Heart right ventricle (tissue), 16 donors: ENCODE measurements at regions of chr17 and their contacts with region 1.

Region 1: DNA sequence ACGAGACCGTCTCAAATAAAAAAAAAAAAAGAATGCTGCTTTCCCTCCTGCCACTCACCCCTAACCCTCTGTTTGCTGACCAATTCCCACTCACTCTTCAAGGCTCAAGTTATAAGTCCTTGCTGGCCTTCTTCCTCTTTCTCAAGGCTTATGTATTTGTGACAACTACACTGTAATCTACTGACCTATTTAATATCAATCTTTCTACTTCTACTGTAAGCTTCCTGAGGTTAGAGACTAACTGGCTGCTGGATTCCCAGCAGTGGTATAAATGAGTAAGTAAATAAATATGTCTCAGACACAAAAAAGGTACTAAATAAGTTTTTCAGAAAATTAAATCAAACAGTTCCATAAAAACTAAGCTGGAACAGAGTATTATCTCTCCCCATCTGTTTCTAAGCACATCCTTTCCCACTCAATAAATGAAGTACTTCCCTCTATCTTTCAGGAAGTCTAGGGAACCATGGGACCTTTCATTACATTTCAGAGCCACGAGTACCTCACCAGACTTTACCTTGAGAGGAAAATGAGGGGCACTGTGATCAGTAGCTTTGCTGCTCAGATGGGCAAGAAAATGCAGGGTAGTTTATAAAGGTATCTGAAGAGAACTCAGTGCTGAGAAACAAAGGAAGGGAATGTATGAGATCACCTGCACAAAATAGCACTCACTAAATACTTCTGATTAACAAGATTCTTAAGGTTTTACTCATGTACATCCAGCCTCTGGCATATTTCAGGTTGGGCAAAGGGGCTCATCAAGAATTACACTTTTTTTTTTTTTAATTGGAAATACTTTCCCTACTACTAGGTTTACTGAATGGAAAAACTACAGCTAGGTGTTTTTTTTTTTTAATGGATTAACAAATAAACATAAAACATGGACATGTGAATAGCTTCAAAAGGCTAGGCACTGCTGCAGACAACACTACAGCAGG is 10.8 kb downstream of the SSH2 start:
- DNase-seq: no peak
- ATAC-seq: peak in 2 of 8 donors; percentile 30 to 58
- H3K4me3 ChIP-seq: no peak overlapping the region
- H3K27ac ChIP-seq: peak overlapping the region in 3 of 10 donors; percentile 7 to 30 (median 8)
- H3K4me1 ChIP-seq: peaks cover 0 to 29% (median 9%) of the 10 kb centered on the region in 9 donors
- H3K27me3 ChIP-seq: no peaks in the 10 kb centered on the region
- CTCF ChIP-seq: no peak

Region 2: DNA sequence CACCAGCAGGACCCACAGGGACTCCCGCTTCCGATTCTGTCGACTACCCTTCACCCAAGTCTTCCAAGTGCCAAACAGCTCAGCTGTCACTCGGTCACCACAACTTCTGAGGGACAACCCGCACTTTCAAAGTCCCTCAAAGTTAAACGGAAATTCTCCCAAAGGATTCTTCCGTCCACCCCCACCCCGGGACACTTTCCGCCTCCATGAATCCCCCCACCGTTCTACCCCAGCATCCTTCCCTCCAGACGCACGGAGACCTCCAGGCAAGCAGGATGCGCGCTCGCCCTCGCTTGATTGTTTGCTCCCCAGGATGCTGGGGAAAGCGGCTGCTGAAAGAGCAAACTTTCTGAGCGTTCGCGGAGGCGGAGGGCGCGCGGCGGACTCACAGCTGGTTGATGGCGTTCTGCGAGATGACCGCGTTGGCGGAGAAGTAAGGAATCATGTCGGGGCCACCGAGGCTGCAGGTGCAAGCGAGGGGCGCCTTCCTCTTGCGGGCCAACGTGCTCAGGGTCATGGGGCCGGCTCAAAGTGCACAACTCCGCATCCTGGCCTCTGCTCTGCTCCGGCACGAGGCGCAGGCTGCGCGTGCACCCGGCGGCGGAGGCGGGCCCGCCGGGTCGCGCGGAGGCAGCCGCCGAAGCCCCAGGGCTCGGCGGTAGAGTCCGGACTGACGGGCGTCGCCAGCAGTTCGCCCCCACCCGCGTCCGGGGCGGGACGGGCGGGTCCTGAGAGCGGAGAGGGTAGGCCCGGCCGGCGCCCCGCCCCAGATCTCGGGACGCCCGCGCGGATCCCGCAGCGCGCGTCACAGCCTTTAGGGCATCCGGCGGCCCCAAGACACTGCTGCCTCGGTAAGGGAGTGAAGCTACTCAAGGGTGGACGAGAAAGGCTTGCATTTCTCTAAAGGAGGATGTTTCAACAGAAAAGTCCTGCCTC is 158.2 kb before region 1 on chr17:
- intact Hi-C with region 1: no loop called
- DNase-seq: peak; percentile 91 to 94
- ATAC-seq: peak; percentile 96 to 99 (median 98)
- H3K4me3 ChIP-seq: peak overlapping the region; percentile 69 to 97 (median 86)
- H3K27ac ChIP-seq: peak overlapping the region; percentile 86 to 96 (median 92)
- H3K4me1 ChIP-seq: peaks cover 3 to 40% (median 19%) of the 10 kb centered on the region in 9 donors
- H3K27me3 ChIP-seq: no peaks in the 10 kb centered on the region
- CTCF ChIP-seq: peak in 2 of 9 donors; percentile 4 to 11

Region 3: GRCh38 chr17:29867643-29868181 is 51.5 kb before region 1 on chr17:
- intact Hi-C with region 1: loop called in 1 of 10 experiments (anchors 10 kb)
- DNase-seq: no peak
- ATAC-seq: no peak
- H3K4me3 ChIP-seq: no peak overlapping the region
- H3K27ac ChIP-seq: no peak overlapping the region
- H3K4me1 ChIP-seq: peaks cover 0 to 31% (median 4%) of the 10 kb centered on the region in 9 donors
- H3K27me3 ChIP-seq: no peaks in the 10 kb centered on the region
- CTCF ChIP-seq: peak in 4 of 9 donors; percentile 21 to 39 (median 30)

Region 4: DNA sequence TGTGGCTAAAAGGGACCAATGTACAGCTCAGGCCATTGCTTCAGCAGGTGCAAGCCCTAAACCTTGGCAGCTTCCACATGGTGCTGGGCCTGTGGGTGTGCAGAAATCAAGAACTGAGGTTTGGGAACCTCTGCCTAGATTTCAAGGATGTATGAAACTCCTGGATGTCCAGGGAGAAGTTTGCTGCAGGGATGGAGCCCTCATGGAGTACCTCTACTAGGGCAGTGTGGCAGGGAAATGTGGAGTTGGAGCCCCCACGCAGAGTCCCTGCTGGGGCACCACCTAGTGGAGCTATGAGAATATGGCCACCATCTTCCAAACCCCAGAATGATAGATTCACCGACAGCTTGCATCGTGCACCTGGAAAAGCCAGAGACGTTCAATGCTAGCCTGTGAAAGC is 35.2 kb after region 1 on chr17:
- intact Hi-C with region 1: no loop called
- DNase-seq: no peak
- ATAC-seq: no peak
- H3K4me3 ChIP-seq: no peak overlapping the region
- H3K27ac ChIP-seq: no peak overlapping the region
- H3K4me1 ChIP-seq: no peaks in the 10 kb centered on the region
- H3K27me3 ChIP-seq: no peaks in the 10 kb centered on the region
- CTCF ChIP-seq: peak in 2 of 9 donors; percentile 11 to 18

Region 5: DNA sequence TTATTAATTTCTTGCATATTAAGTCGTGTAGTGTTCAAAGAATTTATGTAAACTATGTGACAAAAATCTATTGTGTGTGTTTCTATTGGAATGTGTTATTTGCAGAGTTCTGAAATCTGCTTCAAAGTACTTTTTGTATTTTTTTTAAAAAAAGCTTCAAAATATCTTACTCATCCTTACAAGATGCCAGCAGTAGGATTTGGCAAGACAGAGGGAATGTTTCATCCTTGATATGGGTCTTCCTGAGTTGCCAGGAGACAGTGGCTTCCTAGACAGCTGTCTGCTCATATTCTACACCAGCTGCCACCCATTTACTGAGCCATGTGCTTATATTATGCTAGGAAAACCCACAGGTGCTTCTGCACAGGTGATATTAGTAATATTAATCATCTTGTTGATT is 58.6 kb after region 1 on chr17:
- intact Hi-C with region 1: no loop called
- DNase-seq: no peak
- ATAC-seq: no peak
- H3K4me3 ChIP-seq: no peak overlapping the region
- H3K27ac ChIP-seq: no peak overlapping the region
- H3K4me1 ChIP-seq: no peaks in the 10 kb centered on the region
- H3K27me3 ChIP-seq: no peaks in the 10 kb centered on the region
- CTCF ChIP-seq: no peak